GM23248 (cell line): ENCODE measurements at regions of chr10 and their contacts with region 1.

Region 1: GRCh38 chr10:60456053-60456452 is 66.4 kb upstream of the ANK3 start:
- DNase-seq: peak; percentile 82
- H3K4me3 ChIP-seq: no peak overlapping the region
- H3K27ac ChIP-seq: no peak overlapping the region
- H3K4me1 ChIP-seq: 0 out of 2 replicates have a peak, but pooled peaks cover 6% of the 10 kb centered on the region
- H3K27me3 ChIP-seq: no peaks in the 10 kb centered on the region

Region 2: GRCh38 chr10:59648711-59649201 is 807.3 kb before region 1 on chr10:
- in situ Hi-C with region 1: no loop called
- DNase-seq: peak; percentile 33
- H3K4me3 ChIP-seq: no peak overlapping the region
- H3K27ac ChIP-seq: no peak overlapping the region
- H3K4me1 ChIP-seq: no peaks in the 10 kb centered on the region
- H3K27me3 ChIP-seq: no peaks in the 10 kb centered on the region

Region 3: GRCh38 chr10:60757420-60757895 is 301.4 kb after region 1 on chr10:
- in situ Hi-C with region 1: loop called (anchors 25 kb)
- DNase-seq: no peak
- H3K4me3 ChIP-seq: no peak overlapping the region
- H3K27ac ChIP-seq: no peak overlapping the region
- H3K4me1 ChIP-seq: no peaks in the 10 kb centered on the region
- H3K27me3 ChIP-seq: peaks cover 8% of the 10 kb centered on the region; the same call in 1 of the 2 replicates

Region 4: DNA sequence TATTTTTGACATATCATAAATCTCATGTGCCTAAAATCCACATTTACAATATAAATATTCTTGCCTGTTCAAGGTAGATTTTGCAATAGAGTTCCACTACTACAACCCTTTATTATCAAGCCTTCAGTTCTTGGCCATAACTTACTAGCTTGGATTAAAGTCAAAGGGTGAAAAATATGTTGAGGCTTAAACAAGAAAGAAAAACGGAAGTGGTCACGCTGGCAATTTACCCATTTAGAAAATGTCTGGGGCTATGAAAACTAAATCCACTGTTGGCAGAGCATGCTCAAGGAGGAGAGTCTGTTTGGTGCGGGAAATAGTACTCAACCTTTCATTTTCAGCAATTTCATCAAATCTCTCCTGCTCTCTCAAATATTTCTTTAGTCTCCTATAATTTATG is 697.7 kb after region 1 on chr10:
- in situ Hi-C with region 1: no loop called
- DNase-seq: no peak
- H3K4me3 ChIP-seq: no peak overlapping the region
- H3K27ac ChIP-seq: no peak overlapping the region
- H3K4me1 ChIP-seq: no peaks in the 10 kb centered on the region
- H3K27me3 ChIP-seq: no peaks in the 10 kb centered on the region